ENCODE measurements at regions of chr20 and their contacts with region 1.

Region 1: GRCh38 chr20:50189681-50190582 is 698 bp upstream of the CEBPB start:
- DNase-seq: peak; percentile 90 to 96 (median 92)
- ATAC-seq: peak; percentile 58 to 81 (median 76)
- H3K4me3 ChIP-seq: peak overlapping the region; percentile 76 to 96 (median 88)
- H3K27ac ChIP-seq: peak overlapping the region; percentile 97 to 100 (median 98)
- H3K4me1 ChIP-seq: peaks cover 0 to 51% (median 20%) of the 10 kb centered on the region in 12 donors
- H3K27me3 ChIP-seq: no peaks in the 10 kb centered on the region
- CTCF ChIP-seq: peak; percentile 73 to 84 (median 80)
- POLR2A ChIP-seq: no peak

Region 2: DNA sequence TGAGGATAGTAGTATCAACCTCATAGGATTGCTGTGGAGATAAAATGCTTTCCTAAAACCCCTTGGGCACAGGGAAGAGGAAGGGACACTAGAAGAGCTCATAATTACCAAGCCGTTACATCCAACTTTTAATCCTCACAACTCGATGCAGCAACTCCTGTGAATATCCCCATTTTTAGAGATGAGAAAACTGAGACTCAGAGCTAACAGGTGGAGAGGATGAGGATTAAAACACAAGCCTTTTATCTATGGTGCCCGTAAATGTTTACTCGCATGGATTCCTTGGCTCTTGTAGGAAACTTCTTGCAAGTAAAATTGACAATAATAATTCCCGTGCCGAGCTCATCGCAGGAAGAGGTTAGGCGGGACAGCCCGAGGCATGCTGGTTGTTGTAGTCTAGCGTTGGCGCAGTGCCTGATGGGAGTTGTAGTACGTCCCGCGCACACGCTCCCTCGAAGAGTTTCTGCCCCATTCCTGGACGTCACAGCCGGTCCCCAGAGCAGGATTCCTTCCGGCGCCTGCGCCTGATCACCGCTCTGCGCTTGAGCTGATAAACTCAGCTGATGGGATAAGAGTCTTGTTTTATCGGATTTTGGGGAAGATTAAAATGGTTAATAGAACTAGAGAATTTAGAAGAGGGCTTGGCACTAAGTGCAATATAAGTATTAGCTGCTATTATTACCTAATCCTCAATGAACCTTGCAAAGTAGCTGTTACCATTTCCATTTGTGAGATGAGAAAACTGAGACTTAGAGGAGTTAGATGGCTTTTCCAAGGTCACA is 74.2 kb before region 1 on chr20:
- intact Hi-C with region 1: no loop called
- DNase-seq: peak; percentile 97 to 99 (median 98)
- ATAC-seq: peak; percentile 87 to 94 (median 89)
- H3K4me3 ChIP-seq: peak overlapping the region; percentile 30 to 67 (median 56)
- H3K27ac ChIP-seq: peak overlapping the region; percentile 18 to 86 (median 78)
- H3K4me1 ChIP-seq: peaks cover 11 to 50% (median 34%) of the 10 kb centered on the region in 12 donors
- H3K27me3 ChIP-seq: no peaks in the 10 kb centered on the region
- CTCF ChIP-seq: no peak
- POLR2A ChIP-seq: peak in 1 of 2 donors; percentile 61

Region 3: GRCh38 chr20:50286609-50287008 is 96.7 kb after region 1 on chr20:
- intact Hi-C with region 1: loop called in 1 of 10 experiments (anchors 10 kb)
- DNase-seq: peak in 3 of 5 donors; percentile 57 to 76 (median 58)
- ATAC-seq: peak in 3 of 4 donors; percentile 31 to 76 (median 53)
- H3K4me3 ChIP-seq: peak overlapping the region in 6 of 12 donors; percentile 6 to 44 (median 24)
- H3K27ac ChIP-seq: peak overlapping the region; percentile 48 to 87 (median 78)
- H3K4me1 ChIP-seq: peaks cover 0 to 62% (median 22%) of the 10 kb centered on the region in 12 donors
- H3K27me3 ChIP-seq: no peaks in the 10 kb centered on the region
- CTCF ChIP-seq: no peak
- POLR2A ChIP-seq: no peak

Region 4: GRCh38 chr20:50379049-50379990 is 189.4 kb after region 1 on chr20:
- intact Hi-C with region 1: loop called in 5 of 10 experiments (anchors 2 to 10 kb)
- DNase-seq: peak; percentile 89 to 95 (median 91)
- ATAC-seq: peak; percentile 79 to 91 (median 88)
- H3K4me3 ChIP-seq: peak overlapping the region in 10 of 12 donors; percentile 12 to 45 (median 25)
- H3K27ac ChIP-seq: peak overlapping the region; percentile 76 to 88 (median 82)
- H3K4me1 ChIP-seq: peaks cover 9 to 58% (median 22%) of the 10 kb centered on the region in 12 donors
- H3K27me3 ChIP-seq: no peaks in the 10 kb centered on the region
- CTCF ChIP-seq: no peak
- POLR2A ChIP-seq: peak in 1 of 2 donors; percentile 64

Region 5: DNA sequence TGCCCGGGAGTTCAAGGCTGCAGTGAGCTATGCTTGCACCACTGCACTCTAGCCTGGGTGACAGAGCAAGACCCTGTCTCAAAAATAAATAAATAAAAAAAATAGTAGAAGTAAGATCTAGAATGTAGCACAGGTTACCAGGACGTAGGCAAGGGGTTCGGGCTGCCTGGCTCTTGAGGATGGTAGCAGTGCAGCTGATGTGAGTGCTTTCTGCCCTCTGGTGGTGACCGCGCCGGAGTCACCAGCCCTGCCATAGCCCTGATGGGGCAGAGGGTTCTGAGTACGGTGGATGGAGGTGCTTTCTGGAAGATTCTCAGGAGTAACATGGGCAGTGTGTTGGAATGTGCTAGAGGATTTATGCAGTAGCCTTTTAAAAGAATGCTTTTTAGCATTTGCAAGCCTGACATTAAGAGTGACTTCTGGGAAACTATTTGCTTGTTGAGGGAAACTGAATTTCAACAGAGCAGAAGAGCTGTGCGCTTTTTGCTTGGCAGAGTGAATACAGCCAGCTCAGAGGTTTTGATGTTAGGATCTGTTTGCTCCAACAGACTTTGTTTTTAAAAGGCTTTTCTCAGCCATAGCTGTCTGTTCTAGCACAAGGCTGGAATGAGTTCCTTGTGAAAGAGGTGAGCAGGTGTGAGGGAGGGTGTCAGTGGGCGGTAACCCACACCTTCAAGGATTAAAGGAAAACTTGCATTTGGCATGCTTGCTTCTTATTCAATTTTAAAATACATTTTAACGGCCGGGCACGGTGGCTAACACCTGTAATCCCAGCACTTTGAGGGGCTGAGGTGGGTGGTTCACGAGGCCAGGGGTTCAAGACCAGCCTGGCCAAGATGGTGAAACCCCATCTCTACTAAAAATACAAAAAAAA is 386.2 kb after region 1 on chr20:
- intact Hi-C with region 1: loop called (anchors 1 to 5 kb)
- DNase-seq: peak; percentile 62 to 83 (median 72)
- ATAC-seq: peak; percentile 64 to 72 (median 66)
- H3K4me3 ChIP-seq: no peak overlapping the region
- H3K27ac ChIP-seq: peak overlapping the region in 9 of 12 donors; percentile 13 to 84 (median 56)
- H3K4me1 ChIP-seq: peaks cover 0 to 71% (median 36%) of the 10 kb centered on the region in 12 donors
- H3K27me3 ChIP-seq: no peaks in the 10 kb centered on the region
- CTCF ChIP-seq: peak; percentile 53 to 79 (median 70)
- POLR2A ChIP-seq: no peak

Region 6: DNA sequence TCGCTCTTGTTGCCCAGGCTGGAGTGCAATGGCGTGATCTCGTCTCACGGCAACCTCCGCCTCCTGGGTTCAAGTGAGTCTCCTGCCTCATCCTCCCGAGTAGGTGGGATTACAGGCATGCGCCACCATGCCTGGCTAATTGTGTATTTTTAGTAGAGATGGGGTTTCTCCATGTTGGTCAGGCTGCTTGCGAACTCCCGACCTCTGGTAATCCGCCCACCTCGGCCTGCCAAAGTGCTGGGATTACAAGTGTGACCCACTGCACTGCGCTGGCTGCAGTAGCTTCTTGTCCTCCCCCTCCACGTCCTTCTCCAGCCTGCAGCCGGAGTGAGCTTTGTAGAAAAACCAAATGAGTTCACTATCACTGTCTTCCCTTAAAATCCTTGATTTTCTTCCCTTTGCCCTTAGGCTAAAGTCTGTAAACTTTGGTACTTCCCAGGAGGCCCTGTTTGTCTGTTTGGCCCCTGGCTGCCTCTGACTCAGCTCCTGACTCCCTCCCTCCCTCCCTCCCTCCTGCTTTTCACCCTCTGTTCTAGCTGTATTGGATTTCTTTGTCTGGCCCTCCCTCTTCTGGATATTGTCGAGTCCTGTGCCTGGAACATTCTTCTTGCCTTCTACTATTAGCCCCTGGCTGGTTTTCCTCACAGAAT is 554.3 kb after region 1 on chr20:
- intact Hi-C with region 1: loop called in 7 of 10 experiments (anchors 5 to 10 kb)
- DNase-seq: peak; percentile 53 to 77 (median 61)
- ATAC-seq: peak; percentile 87 to 94 (median 90)
- H3K4me3 ChIP-seq: no peak overlapping the region
- H3K27ac ChIP-seq: peak overlapping the region; percentile 55 to 89 (median 83)
- H3K4me1 ChIP-seq: peaks cover 0 to 45% (median 19%) of the 10 kb centered on the region in 12 donors
- H3K27me3 ChIP-seq: no peaks in the 10 kb centered on the region
- CTCF ChIP-seq: peak in 10 of 12 donors; percentile 18 to 60 (median 34)
- POLR2A ChIP-seq: no peak

Measured in heart left ventricle (tissue), 16 donors.